ENCODE measurements at regions of chr4 and their contacts with region 1.

Region 1: GRCh38 chr4:38424151-38424871 is 239.7 kb upstream of the KLF3 start:
- DNase-seq: no peak
- ATAC-seq: no peak
- H3K4me3 ChIP-seq: no peak overlapping the region
- H3K27ac ChIP-seq: no peak overlapping the region
- H3K4me1 ChIP-seq: no peaks in the 10 kb centered on the region
- H3K27me3 ChIP-seq: peaks cover 0 to 4% of the 10 kb centered on the region in 2 donors

Region 2: GRCh38 chr4:38360201-38360600 is 64.1 kb before region 1 on chr4:
- intact Hi-C with region 1: no loop called
- DNase-seq: no peak
- ATAC-seq: no peak
- H3K4me3 ChIP-seq: no peak overlapping the region
- H3K27ac ChIP-seq: no peak overlapping the region
- H3K4me1 ChIP-seq: no peaks in the 10 kb centered on the region
- H3K27me3 ChIP-seq: no peaks in the 10 kb centered on the region

Region 3: GRCh38 chr4:38374791-38375054 is 49.6 kb before region 1 on chr4:
- intact Hi-C with region 1: loop called in 1 of 2 experiments (anchors 2 kb)
- DNase-seq: no peak
- ATAC-seq: no peak
- H3K4me3 ChIP-seq: no peak overlapping the region
- H3K27ac ChIP-seq: no peak overlapping the region
- H3K4me1 ChIP-seq: peaks cover 2 to 6% of the 10 kb centered on the region in 2 donors
- H3K27me3 ChIP-seq: no peaks in the 10 kb centered on the region

Measured in aorta (tissue), 5 donors.